CD8-positive, alpha-beta T cell (primary cell): ENCODE measurements at regions of chr2 and their contacts with region 1.

Region 1: GRCh38 chr2:69724540-69725159 is 17.3 kb upstream of the ANXA4 start:
- DNase-seq: peak; percentile 61 to 90 (median 84)
- ATAC-seq: peak; percentile 88
- H3K4me3 ChIP-seq: no peak overlapping the region
- H3K4me3 Mint-ChIP-seq: peak overlapping the region; percentile 52
- H3K27ac ChIP-seq: no peak overlapping the region
- H3K27ac Mint-ChIP-seq: no peak overlapping the region
- H3K4me1 ChIP-seq: peaks cover 4% of the 10 kb centered on the region
- H3K4me1 Mint-ChIP-seq: peaks cover 6% of the 10 kb centered on the region
- H3K27me3 ChIP-seq: no peaks in the 10 kb centered on the region
- H3K27me3 Mint-ChIP-seq: no peaks in the 10 kb centered on the region
- CTCF ChIP-seq: peak; percentile 97

Region 2: DNA sequence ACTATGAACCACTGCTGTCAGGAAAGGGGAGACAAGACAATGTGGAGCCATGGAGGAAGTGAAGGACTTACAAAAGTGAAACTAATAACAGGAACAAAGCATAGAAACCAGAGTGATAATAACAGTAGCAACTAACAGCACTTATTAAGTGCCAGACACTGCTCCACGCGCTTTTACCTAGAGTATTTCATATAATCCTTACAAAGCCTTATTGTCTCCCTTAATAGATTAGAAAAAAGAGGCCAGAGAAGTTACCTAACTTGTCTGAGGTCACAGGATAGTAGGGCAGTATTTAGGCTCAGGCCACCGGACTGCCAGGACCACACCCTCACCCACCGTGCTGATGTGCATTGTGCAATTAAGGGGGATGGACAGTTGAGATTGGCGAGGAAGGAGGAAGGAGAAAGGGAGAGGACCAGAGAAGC is 188.8 kb before region 1 on chr2:
- CTCF ChIA-PET with region 1: interaction called, 11 read pairs
- POLR2A ChIA-PET with region 1: no interaction called
- intact Hi-C with region 1: no loop called
- DNase-seq: no peak
- ATAC-seq: no peak
- H3K4me3 ChIP-seq: no peak overlapping the region
- H3K4me3 Mint-ChIP-seq: peak overlapping the region; percentile 1
- H3K27ac ChIP-seq: peak overlapping the region in 1 of 2 experiments; percentile 22
- H3K27ac Mint-ChIP-seq: peak overlapping the region; percentile 79
- H3K4me1 ChIP-seq: peaks cover 4% of the 10 kb centered on the region
- H3K4me1 Mint-ChIP-seq: peaks cover 42% of the 10 kb centered on the region
- H3K27me3 ChIP-seq: no peaks in the 10 kb centered on the region
- H3K27me3 Mint-ChIP-seq: no peaks in the 10 kb centered on the region
- CTCF ChIP-seq: no peak

Region 3: GRCh38 chr2:69616756-69617155 is 107.9 kb before region 1 on chr2:
- CTCF ChIA-PET with region 1: interaction called, 10 read pairs
- POLR2A ChIA-PET with region 1: no interaction called
- intact Hi-C with region 1: no loop called
- DNase-seq: peak in 5 of 9 experiments; percentile 23 to 58 (median 48)
- ATAC-seq: peak; percentile 44
- H3K4me3 ChIP-seq: no peak overlapping the region
- H3K4me3 Mint-ChIP-seq: peak overlapping the region; percentile 38
- H3K27ac ChIP-seq: peak overlapping the region in 1 of 2 experiments; percentile 26
- H3K27ac Mint-ChIP-seq: no peak overlapping the region
- H3K4me1 ChIP-seq: peaks cover 79% of the 10 kb centered on the region
- H3K4me1 Mint-ChIP-seq: peaks cover 42% of the 10 kb centered on the region
- H3K27me3 ChIP-seq: no peaks in the 10 kb centered on the region
- H3K27me3 Mint-ChIP-seq: no peaks in the 10 kb centered on the region
- CTCF ChIP-seq: no peak

Region 4: DNA sequence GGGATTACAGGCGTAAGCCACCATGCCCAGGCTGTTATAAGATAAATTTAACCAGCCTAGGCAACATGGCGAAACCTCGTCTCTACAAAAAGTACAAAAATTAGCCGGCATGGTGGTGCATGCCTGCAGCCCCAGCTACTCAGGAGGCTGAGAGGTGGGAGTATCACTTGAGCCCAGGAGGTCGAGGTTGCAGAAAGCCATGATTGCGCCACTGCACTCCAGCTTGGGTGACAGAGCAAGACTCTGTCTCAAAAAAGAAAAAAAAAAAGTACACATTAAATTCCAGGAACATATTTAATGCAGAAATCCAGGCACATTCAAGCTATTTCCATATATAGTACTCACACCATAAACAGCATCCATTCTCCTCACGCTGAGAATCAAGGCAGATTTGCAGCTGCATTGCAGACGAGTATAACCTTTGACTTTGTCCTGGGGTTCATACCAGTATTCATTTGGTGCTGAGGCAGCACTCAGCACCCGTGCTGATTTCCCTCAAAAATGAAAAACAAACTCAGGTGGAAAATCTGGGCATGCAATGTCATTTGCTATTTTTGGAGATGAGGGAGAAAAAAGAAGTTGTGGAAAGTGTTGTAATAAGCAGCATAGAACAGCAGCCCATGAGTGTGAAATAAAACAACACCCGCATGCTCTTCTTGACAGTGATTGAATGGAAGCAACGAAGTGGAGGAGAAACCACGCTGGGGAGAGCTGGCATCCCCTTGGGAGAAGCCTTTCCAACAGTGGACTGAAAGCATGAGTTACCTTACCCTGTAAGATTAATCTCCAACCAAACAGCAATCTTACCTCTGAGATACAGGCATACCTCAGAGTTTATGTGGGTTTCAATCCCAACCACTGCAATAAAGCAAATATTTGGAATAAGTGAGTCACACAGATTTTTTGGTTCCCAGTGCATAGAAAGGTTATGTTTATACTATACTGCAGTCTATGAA is 29.5 kb before region 1 on chr2:
- CTCF ChIA-PET with region 1: interaction called, 18 read pairs
- POLR2A ChIA-PET with region 1: no interaction called
- intact Hi-C with region 1: no loop called
- DNase-seq: no peak
- ATAC-seq: no peak
- H3K4me3 ChIP-seq: no peak overlapping the region
- H3K4me3 Mint-ChIP-seq: peak overlapping the region; percentile 10
- H3K27ac ChIP-seq: peak overlapping the region in 1 of 2 experiments; percentile 4
- H3K27ac Mint-ChIP-seq: peak overlapping the region; percentile 98
- H3K4me1 ChIP-seq: peaks cover 83% of the 10 kb centered on the region
- H3K4me1 Mint-ChIP-seq: peaks cover 91% of the 10 kb centered on the region
- H3K27me3 ChIP-seq: no peaks in the 10 kb centered on the region
- H3K27me3 Mint-ChIP-seq: no peaks in the 10 kb centered on the region
- CTCF ChIP-seq: no peak

Region 5: GRCh38 chr2:69773206-69773767 is 48.6 kb after region 1 on chr2:
- CTCF ChIA-PET with region 1: interaction called, 11 read pairs
- POLR2A ChIA-PET with region 1: interaction called, 3 read pairs
- intact Hi-C with region 1: no loop called
- DNase-seq: no peak
- ATAC-seq: no peak
- H3K4me3 ChIP-seq: no peak overlapping the region
- H3K4me3 Mint-ChIP-seq: no peak overlapping the region
- H3K27ac ChIP-seq: no peak overlapping the region
- H3K27ac Mint-ChIP-seq: no peak overlapping the region
- H3K4me1 ChIP-seq: peaks cover 13% of the 10 kb centered on the region
- H3K4me1 Mint-ChIP-seq: peaks cover 33% of the 10 kb centered on the region
- H3K27me3 ChIP-seq: no peaks in the 10 kb centered on the region
- H3K27me3 Mint-ChIP-seq: no peaks in the 10 kb centered on the region
- CTCF ChIP-seq: no peak

Region 6: GRCh38 chr2:69893684-69894551 is 169.3 kb after region 1 on chr2 and contains the start of gene SNRNP27:
- CTCF ChIA-PET with region 1: no interaction called
- POLR2A ChIA-PET with region 1: no interaction called
- intact Hi-C with region 1: loop called in 1 of 2 experiments (anchors 10 kb)
- DNase-seq: peak; percentile 71 to 89 (median 83)
- ATAC-seq: peak; percentile 92
- H3K4me3 ChIP-seq: peak within 1 kb of the TSS; percentile 85 to 88
- H3K4me3 Mint-ChIP-seq: peak within 1 kb of the TSS; percentile 99
- H3K27ac ChIP-seq: peak within 1 kb of the TSS; percentile 82 to 86
- H3K27ac Mint-ChIP-seq: peak within 1 kb of the TSS; percentile 99
- H3K4me1 ChIP-seq: peaks cover 13% of the 10 kb centered on the region
- H3K4me1 Mint-ChIP-seq: peaks cover 46% of the 10 kb centered on the region
- H3K27me3 ChIP-seq: no peaks in the 10 kb centered on the region
- H3K27me3 Mint-ChIP-seq: no peaks in the 10 kb centered on the region
- CTCF ChIP-seq: no peak
- total RNA-seq, gene SNRNP27: 47.9 to 58.5 TPM